Activated CD4-positive, alpha-beta T cell treated with anti-CD3 and anti-CD28 coated beads for 36 hours (primary cell): ENCODE measurements at regions of chr17 and their contacts with region 1.

Region 1: DNA sequence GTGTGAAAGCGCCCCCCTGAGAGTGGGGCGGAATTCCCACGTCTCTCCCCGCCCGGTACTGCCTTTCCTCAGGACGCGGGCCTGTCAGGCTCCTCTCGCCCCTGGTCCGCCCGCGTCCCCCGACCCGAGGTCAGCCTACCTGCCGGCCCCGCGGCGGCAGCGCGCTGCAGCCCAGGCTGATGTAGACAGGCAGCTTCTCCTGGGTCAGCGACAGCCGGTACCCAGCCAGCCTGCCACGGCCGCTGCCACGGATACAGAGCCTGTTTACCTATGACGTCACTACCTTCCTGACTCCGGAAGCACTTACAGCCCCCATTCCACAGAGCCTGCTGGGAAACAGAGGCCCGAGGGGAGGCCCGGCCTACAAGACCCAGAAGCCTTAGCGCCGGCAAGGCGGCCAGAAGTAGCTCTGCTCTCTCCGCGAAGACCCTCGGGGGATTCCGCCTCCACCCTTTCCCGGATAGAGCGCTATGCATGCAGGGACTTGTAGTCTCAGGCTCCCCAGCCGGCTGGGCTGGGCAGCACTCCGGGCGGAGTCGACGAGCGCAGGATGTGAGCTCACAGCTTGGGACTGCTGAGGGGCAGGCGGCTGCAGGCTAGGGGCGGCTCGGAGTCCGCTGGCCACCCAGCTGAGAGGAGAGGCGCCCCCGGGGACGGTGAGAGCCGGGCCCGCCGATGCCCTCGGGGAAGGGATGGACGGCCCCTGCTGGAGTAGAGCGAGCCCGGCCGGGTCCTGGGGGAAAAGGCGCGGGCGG is at the starts of genes IFT20 and TNFAIP1:
- DNase-seq: peak; percentile 99
- ATAC-seq: peak; percentile 97
- H3K4me3 Mint-ChIP-seq: peak within 1 kb of the TSS; percentile 96
- H3K27ac Mint-ChIP-seq: peak within 1 kb of the TSS; percentile 91
- H3K4me1 Mint-ChIP-seq: peaks cover 36% of the 10 kb centered on the region
- H3K27me3 Mint-ChIP-seq: no peaks in the 10 kb centered on the region
- total RNA-seq, gene IFT20: 12.9 to 17.3 TPM
- total RNA-seq, gene TNFAIP1: 25.5 to 26.1 TPM

Region 2: GRCh38 chr17:27455914-27456680 is 879.3 kb before region 1 on chr17 and contains the start of gene KSR1:
- CTCF ChIA-PET with region 1: no interaction called
- POLR2A ChIA-PET with region 1: no interaction called
- intact Hi-C with region 1: loop called in 1 of 2 experiments (anchors 10 kb)
- DNase-seq: peak; percentile 92
- ATAC-seq: peak; percentile 93
- H3K4me3 Mint-ChIP-seq: peak within 1 kb of the TSS; percentile 88
- H3K27ac Mint-ChIP-seq: peak within 1 kb of the TSS; percentile 83
- H3K4me1 Mint-ChIP-seq: peaks cover 43% of the 10 kb centered on the region
- H3K27me3 Mint-ChIP-seq: peaks cover 6% of the 10 kb centered on the region
- total RNA-seq, gene KSR1: 96.6 to 113 TPM

Region 3: GRCh38 chr17:28252436-28252835 is 82.9 kb before region 1 on chr17:
- CTCF ChIA-PET with region 1: interaction called, 12 read pairs
- POLR2A ChIA-PET with region 1: no interaction called
- intact Hi-C with region 1: loop called in 1 of 2 experiments (anchors 1 kb)
- DNase-seq: no peak
- ATAC-seq: no peak
- H3K4me3 Mint-ChIP-seq: no peak overlapping the region
- H3K27ac Mint-ChIP-seq: no peak overlapping the region
- H3K4me1 Mint-ChIP-seq: peaks cover 5% of the 10 kb centered on the region
- H3K27me3 Mint-ChIP-seq: peaks cover 14% of the 10 kb centered on the region

Region 4: GRCh38 chr17:28371245-28372202 is 36.1 kb after region 1 on chr17 and contains the start of gene SARM1:
- CTCF ChIA-PET with region 1: interaction called, 4 read pairs
- POLR2A ChIA-PET with region 1: interaction called, 5 read pairs
- intact Hi-C with region 1: loop called (anchors 1 kb)
- DNase-seq: peak; percentile 95
- ATAC-seq: peak; percentile 95
- H3K4me3 Mint-ChIP-seq: peak within 1 kb of the TSS; percentile 76
- H3K27ac Mint-ChIP-seq: peak within 1 kb of the TSS; percentile 86
- H3K4me1 Mint-ChIP-seq: peaks cover 22% of the 10 kb centered on the region
- H3K27me3 Mint-ChIP-seq: no peaks in the 10 kb centered on the region
- total RNA-seq, gene SARM1: 18.1 to 21.9 TPM

Region 5: DNA sequence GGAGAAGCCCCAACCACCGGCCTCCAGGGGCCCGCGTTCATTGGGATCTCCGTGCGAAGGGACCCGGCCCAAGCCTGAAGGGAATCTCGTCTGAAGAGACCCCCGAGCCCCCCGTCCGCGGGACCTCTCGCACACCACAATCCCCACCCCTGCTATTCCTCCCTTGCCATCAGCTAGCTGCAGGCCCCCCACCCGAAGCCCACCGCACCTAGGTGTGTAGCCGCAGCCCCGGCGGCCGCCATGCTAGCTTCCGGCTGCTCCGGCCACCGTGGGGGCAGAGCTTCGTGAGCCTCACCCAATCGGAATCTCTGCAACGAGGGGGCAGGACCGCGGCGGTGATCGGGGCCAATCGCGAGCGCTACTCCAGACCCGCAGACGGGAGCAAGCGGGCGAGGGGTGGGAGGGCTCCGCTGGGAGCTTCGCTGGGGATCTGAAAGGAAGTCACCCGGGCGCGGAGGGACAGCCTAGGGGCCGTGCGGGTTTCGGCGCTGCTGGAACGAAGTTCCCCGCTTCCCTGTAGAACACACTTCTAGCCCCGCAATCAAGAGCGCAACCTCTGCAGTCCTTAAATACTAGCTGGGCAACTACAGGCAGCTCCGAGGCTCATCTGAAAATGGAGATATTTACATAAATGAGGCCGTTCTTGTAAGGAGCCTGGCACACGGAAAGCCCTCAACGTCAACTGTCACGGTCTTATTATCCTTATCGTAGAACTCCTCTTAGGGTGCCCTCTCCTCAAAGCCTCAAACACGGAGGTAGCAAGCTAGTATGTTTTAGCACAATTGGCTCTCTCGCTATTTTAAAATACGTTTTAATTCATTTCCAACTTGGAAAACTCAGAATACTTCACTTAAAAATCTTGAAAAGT is 236.1 kb after region 1 on chr17 and contains the start of gene PIGS:
- CTCF ChIA-PET with region 1: no interaction called
- POLR2A ChIA-PET with region 1: no interaction called
- intact Hi-C with region 1: loop called in 1 of 2 experiments (anchors 1 kb)
- DNase-seq: peak; percentile 96
- ATAC-seq: peak; percentile 99
- H3K4me3 Mint-ChIP-seq: peak within 1 kb of the TSS; percentile 95
- H3K27ac Mint-ChIP-seq: peak within 1 kb of the TSS; percentile 94
- H3K4me1 Mint-ChIP-seq: peaks cover 51% of the 10 kb centered on the region
- H3K27me3 Mint-ChIP-seq: no peaks in the 10 kb centered on the region
- total RNA-seq, gene PIGS: 38.7 to 41.4 TPM